PC-3 (cell line): ENCODE measurements at regions of chr1 and their contacts with region 1.

Region 1: GRCh38 chr1:28792644-28793121 is 19.3 kb upstream of the OPRD1 start:
- DNase-seq: no peak
- ATAC-seq: no peak
- H3K4me3 ChIP-seq: no peak overlapping the region
- H3K27ac ChIP-seq: no peak overlapping the region
- H3K4me1 ChIP-seq: no peaks in the 10 kb centered on the region
- H3K27me3 ChIP-seq: no peaks in the 10 kb centered on the region
- CTCF ChIP-seq: peak; percentile 30; the same call in 1 of the 2 replicates

Region 2: GRCh38 chr1:28682840-28683239 is 109.8 kb before region 1 on chr1:
- CTCF ChIA-PET with region 1: no interaction called
- POLR2A ChIA-PET with region 1: no interaction called
- intact Hi-C with region 1: no loop called
- DNase-seq: no peak
- ATAC-seq: no peak
- H3K4me3 ChIP-seq: no peak overlapping the region
- H3K27ac ChIP-seq: no peak overlapping the region
- H3K4me1 ChIP-seq: no peaks in the 10 kb centered on the region
- H3K27me3 ChIP-seq: no peaks in the 10 kb centered on the region
- CTCF ChIP-seq: no peak

Region 3: GRCh38 chr1:28775121-28775944 is 17.4 kb before region 1 on chr1:
- CTCF ChIA-PET with region 1: no interaction called
- POLR2A ChIA-PET with region 1: no interaction called
- intact Hi-C with region 1: no loop called
- DNase-seq: no peak
- ATAC-seq: no peak; the same call in 1 of the 2 replicates
- H3K4me3 ChIP-seq: no peak overlapping the region
- H3K27ac ChIP-seq: no peak overlapping the region
- H3K4me1 ChIP-seq: no peaks in the 10 kb centered on the region
- H3K27me3 ChIP-seq: no peaks in the 10 kb centered on the region
- CTCF ChIP-seq: no peak

Region 4: DNA sequence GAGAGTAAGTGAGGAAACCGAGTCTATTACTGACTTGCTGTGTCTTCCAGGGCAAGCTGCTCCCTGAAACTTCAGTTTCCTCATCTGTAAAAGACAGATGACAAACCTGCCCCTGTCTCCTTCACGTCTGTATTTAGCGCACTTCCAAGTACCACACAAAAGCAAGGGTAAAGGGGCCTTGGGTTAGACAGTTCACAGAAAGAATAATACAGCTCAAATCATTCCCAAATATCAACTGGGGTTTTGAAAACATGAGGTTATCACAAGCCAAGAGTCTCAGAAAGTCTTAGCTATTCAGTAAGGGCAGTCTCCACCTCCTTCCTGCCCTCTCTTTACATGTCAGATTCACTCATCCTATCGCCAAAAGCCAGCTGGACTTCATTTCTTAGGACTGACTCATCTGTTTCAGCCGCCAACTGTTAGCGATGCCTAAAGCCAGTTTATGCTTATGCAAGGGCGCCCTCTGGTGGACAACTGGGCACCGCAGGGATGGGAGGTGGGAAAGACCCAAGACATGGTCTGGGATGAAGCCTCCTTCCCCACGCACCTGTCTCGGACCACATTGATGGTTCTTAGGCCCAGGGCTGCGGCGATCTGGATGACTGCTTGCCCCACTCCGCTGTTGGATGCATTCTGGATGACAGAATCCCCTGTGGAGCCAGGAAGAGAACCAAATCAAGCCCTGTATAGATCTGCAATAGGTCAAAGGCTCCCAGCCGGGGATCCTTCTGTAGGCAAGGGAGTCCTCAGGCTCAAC is 410.1 kb after region 1 on chr1:
- CTCF ChIA-PET with region 1: no interaction called
- POLR2A ChIA-PET with region 1: no interaction called
- intact Hi-C with region 1: loop called (anchors 5 kb)
- DNase-seq: peak; percentile 99
- ATAC-seq: peak; percentile 96
- H3K4me3 ChIP-seq: peak overlapping the region; percentile 36; the same call in 1 of the 2 replicates
- H3K27ac ChIP-seq: peak overlapping the region; percentile 42
- H3K4me1 ChIP-seq: peaks cover 17% of the 10 kb centered on the region
- H3K27me3 ChIP-seq: no peaks in the 10 kb centered on the region
- CTCF ChIP-seq: peak; percentile 96